B cell (primary cell): ENCODE measurements at regions of chr15 and their contacts with region 1.

Region 1: GRCh38 chr15:69475769-69476358 is 23.2 kb downstream of the RPLP1 start:
- DNase-seq: peak; percentile 76
- ATAC-seq: peak; percentile 87
- H3K4me3 ChIP-seq: no peak overlapping the region
- H3K4me3 Mint-ChIP-seq: no peak overlapping the region
- H3K27ac ChIP-seq: no peak overlapping the region
- H3K27ac Mint-ChIP-seq: no peak overlapping the region
- H3K4me1 ChIP-seq: peaks cover 0 to 4% of the 10 kb centered on the region in 2 donors
- H3K4me1 Mint-ChIP-seq: peaks cover 2% of the 10 kb centered on the region
- H3K27me3 ChIP-seq: peaks cover 0 to 20% (median 8%) of the 10 kb centered on the region in 4 experiments
- H3K27me3 Mint-ChIP-seq: peaks cover 19% of the 10 kb centered on the region
- CTCF ChIP-seq: peak; percentile 97

Region 2: DNA sequence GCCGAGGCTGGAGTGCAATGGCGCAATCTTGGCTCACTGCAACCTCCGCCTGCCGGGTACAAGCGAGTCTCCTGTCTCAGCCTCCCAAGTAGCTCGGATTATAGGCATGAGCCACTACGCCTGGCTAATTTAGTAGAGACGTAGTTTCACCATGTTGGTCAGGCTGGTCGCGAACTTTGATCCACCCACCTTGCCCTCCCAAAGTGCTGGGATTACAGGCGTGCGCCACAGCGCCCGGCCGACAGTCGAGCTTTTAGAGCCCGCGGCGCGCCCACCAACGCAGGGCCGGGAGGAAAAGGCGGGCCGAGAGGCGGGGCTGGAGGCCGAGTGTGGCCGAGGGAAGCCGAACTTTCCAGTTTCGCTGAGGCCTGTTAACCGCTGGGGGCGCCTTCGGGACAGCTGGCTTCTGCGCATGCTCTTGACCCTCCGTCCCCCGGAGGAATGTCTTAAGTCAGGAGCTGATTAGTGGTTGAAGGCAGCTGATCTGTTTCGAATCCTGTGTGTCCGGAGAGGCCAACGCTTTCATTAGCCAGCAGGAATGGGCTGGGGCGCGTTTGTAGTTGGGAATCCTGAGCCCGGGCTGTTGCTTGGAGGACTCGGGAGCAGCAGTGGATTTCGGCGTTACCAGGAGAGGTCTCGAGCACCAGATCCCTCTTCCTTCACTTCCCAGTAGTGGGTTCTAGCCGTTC is 13.2 kb before region 1 on chr15:
- CTCF ChIA-PET with region 1: interaction called, 13 read pairs
- POLR2A ChIA-PET with region 1: no interaction called
- intact Hi-C with region 1: no loop called
- DNase-seq: peak; percentile 94
- ATAC-seq: peak; percentile 99
- H3K4me3 ChIP-seq: peak overlapping the region; percentile 70 to 90 (median 86)
- H3K4me3 Mint-ChIP-seq: peak overlapping the region; percentile 88
- H3K27ac ChIP-seq: peak overlapping the region; percentile 57 to 77
- H3K27ac Mint-ChIP-seq: peak overlapping the region; percentile 75
- H3K4me1 ChIP-seq: peaks cover 11 to 16% of the 10 kb centered on the region in 2 donors
- H3K4me1 Mint-ChIP-seq: peaks cover 22% of the 10 kb centered on the region
- H3K27me3 ChIP-seq: no peaks in the 10 kb centered on the region
- H3K27me3 Mint-ChIP-seq: no peaks in the 10 kb centered on the region
- CTCF ChIP-seq: peak; percentile 83

Region 3: GRCh38 chr15:69762373-69763148 is 286.7 kb after region 1 on chr15:
- CTCF ChIA-PET with region 1: no interaction called
- POLR2A ChIA-PET with region 1: no interaction called
- intact Hi-C with region 1: no loop called
- DNase-seq: no peak
- ATAC-seq: no peak
- H3K4me3 ChIP-seq: no peak overlapping the region
- H3K4me3 Mint-ChIP-seq: no peak overlapping the region
- H3K27ac ChIP-seq: no peak overlapping the region
- H3K27ac Mint-ChIP-seq: peak overlapping the region; percentile 51
- H3K4me1 ChIP-seq: peaks cover 50 to 53% of the 10 kb centered on the region in 2 donors
- H3K4me1 Mint-ChIP-seq: peaks cover 53% of the 10 kb centered on the region
- H3K27me3 ChIP-seq: peaks cover 0 to 1% (median 0%) of the 10 kb centered on the region in 4 experiments
- H3K27me3 Mint-ChIP-seq: peaks cover 18% of the 10 kb centered on the region
- CTCF ChIP-seq: no peak

Region 4: DNA sequence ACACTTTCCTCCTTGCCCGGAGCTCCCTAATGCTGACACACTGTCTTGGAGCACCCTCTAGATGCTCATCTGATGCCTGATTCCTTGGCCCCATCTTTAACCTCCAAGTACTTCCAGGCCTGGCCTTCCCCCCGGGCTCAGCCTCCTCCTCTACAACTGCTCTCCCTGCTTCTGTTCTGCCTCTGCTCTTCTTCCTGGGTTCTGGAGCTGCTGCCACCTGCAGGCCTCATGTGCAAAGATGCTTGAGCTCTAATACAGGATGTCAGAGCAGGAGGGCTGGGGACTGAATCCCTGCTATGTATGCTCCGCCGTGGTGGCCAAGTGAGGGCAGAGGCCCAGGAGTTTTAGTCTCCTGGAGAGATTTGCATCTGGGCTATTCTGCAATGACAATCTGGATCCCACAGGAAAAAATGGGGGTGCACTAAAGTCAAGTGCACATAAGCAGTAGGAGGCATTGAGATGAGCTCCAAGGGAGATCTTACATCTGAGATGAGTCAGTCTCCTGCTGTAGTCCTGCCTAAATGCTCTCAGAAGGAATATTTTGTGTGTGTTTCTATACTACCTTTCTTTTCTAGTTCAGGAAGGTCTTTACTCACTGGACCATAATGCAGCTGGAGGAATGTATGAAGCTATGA is 991.1 kb after region 1 on chr15:
- CTCF ChIA-PET with region 1: interaction called, 71 read pairs
- POLR2A ChIA-PET with region 1: no interaction called
- intact Hi-C with region 1: loop called (anchors 1 kb)
- DNase-seq: peak; percentile 70
- ATAC-seq: peak; percentile 84
- H3K4me3 ChIP-seq: no peak overlapping the region
- H3K4me3 Mint-ChIP-seq: no peak overlapping the region
- H3K27ac ChIP-seq: no peak overlapping the region
- H3K27ac Mint-ChIP-seq: peak overlapping the region; percentile 3
- H3K4me1 ChIP-seq: peaks cover 11 to 15% of the 10 kb centered on the region in 2 donors
- H3K4me1 Mint-ChIP-seq: peaks cover 21% of the 10 kb centered on the region
- H3K27me3 ChIP-seq: peaks cover 0 to 12% (median under 1%) of the 10 kb centered on the region in 4 experiments
- H3K27me3 Mint-ChIP-seq: peaks cover 9% of the 10 kb centered on the region
- CTCF ChIP-seq: peak; percentile 71

Region 5: DNA sequence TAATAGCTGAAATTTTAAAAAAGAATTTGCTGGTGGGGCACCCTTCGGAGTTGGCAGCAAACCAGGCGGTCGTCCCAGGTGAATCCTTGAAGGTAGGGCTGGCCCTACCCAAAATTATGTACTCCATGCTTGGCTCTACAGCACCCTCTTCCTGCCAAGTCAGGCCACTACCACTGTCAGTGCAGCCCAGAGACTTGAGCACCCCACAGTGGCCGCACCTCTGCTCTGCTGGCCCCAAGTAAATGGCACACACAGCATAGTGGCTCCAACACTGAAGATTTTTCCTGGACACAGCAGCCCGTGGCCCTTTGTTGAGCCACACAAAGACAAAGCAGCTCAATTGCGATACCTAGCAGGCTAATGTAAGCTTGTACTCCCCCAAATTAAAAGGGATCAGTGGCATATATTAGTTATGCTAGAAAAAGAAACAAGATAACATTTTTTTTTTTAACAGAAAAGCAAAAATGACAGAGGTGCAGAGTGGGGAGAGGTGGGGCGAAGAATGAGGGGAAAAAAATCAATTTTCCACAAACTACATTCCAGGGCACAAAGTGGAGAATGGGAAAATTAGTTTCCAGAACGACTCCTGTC is 1037.0 kb after region 1 on chr15:
- CTCF ChIA-PET with region 1: interaction called, 5 read pairs
- POLR2A ChIA-PET with region 1: no interaction called
- intact Hi-C with region 1: loop called (anchors 1 kb)
- DNase-seq: peak; percentile 56
- ATAC-seq: peak; percentile 83
- H3K4me3 ChIP-seq: no peak overlapping the region
- H3K4me3 Mint-ChIP-seq: no peak overlapping the region
- H3K27ac ChIP-seq: no peak overlapping the region
- H3K27ac Mint-ChIP-seq: no peak overlapping the region
- H3K4me1 ChIP-seq: peaks cover 3 to 17% of the 10 kb centered on the region in 2 donors
- H3K4me1 Mint-ChIP-seq: peaks cover 22% of the 10 kb centered on the region
- H3K27me3 ChIP-seq: no peaks in the 10 kb centered on the region
- H3K27me3 Mint-ChIP-seq: peaks cover 17% of the 10 kb centered on the region
- CTCF ChIP-seq: peak; percentile 65

Region 6: DNA sequence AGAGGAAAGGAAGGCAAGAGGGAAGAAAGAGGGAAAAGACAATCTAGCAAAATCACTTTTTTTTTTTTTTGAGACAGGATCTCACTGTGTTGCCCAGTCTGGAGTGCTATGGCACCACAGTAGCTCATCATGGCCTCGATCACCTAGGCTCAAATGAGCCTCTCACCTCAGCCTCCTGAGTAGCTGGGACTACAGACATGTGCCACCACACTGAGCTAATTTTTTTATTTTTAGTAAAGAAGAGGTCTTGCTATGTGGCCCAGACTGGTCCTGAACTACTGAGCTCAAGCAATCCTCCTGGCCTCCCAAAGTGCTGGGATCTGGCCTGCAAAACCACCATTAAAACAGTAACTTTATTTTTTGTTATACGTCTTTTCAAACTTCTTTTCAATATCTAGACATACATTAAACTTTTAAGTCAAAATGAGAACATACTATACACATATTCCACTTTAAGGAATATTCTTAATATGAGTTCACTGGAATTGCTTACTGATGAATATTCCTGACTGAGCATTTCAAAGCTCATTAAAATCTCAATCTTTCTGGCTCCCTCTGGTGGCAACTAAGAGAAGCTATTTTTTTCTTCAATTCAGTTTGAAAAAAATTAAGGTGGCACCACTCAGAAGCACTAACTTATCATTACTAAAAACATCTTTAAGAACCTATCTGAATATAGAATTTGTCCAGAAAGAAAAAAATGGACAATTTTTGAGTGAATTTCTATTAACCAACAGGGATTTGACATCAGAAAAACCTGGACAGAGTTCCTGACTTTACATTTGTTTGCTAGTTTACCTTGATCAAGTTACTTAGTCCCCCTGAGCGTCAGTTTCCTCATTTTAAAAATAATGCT is 1246.6 kb after region 1 on chr15:
- CTCF ChIA-PET with region 1: interaction called, 129 read pairs
- POLR2A ChIA-PET with region 1: no interaction called
- intact Hi-C with region 1: loop called (anchors 10 kb)
- DNase-seq: peak; percentile 57
- ATAC-seq: peak; percentile 39
- H3K4me3 ChIP-seq: no peak overlapping the region
- H3K4me3 Mint-ChIP-seq: no peak overlapping the region
- H3K27ac ChIP-seq: no peak overlapping the region
- H3K27ac Mint-ChIP-seq: no peak overlapping the region
- H3K4me1 ChIP-seq: no peaks in the 10 kb centered on the region
- H3K4me1 Mint-ChIP-seq: no peaks in the 10 kb centered on the region
- H3K27me3 ChIP-seq: peaks cover 0 to 11% (median 2%) of the 10 kb centered on the region in 4 experiments
- H3K27me3 Mint-ChIP-seq: peaks cover 7% of the 10 kb centered on the region
- CTCF ChIP-seq: peak; percentile 94